ENCODE measurements at regions of chr6 and their contacts with region 1.

Region 1: GRCh38 chr6:105077596-105078385 is 102.0 kb downstream of the POPDC3 start:
- DNase-seq: peak; percentile 69
- H3K4me3 Mint-ChIP-seq: no peak overlapping the region
- H3K27ac Mint-ChIP-seq: no peak overlapping the region
- H3K4me1 Mint-ChIP-seq: peaks cover 16% of the 10 kb centered on the region
- H3K27me3 Mint-ChIP-seq: no peaks in the 10 kb centered on the region
- CTCF ChIP-seq: peak; percentile 42

Region 2: DNA sequence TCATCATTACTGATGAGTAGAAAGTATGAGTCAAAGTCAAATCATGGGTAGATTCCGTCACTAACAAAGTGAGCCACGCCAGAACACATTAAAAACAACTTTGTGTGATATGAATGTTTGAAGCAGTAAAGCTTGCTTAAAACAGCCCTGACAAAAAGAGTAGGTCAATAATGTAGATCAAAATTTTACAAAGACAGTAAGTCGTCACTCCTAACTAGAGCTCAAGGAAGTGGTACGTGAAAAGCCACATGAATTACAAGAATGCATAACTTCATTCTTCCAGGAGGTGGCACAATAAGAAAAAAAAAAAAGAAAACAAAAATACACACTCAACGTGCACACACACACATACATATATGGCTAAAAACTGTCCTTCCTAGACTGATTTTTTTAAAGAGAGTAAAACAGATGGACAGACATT is 288.0 kb before region 1 on chr6:
- CTCF ChIA-PET with region 1: interaction called, 52 read pairs
- POLR2A ChIA-PET with region 1: interaction called, 5 read pairs
- intact Hi-C with region 1: loop called (anchors 1 kb)
- DNase-seq: peak; percentile 53
- H3K4me3 Mint-ChIP-seq: peak overlapping the region; percentile 59
- H3K27ac Mint-ChIP-seq: peak overlapping the region; percentile 95
- H3K4me1 Mint-ChIP-seq: peaks cover 21% of the 10 kb centered on the region
- H3K27me3 Mint-ChIP-seq: no peaks in the 10 kb centered on the region
- CTCF ChIP-seq: peak; percentile 45

Region 3: GRCh38 chr6:104859225-104860146 is 218.3 kb before region 1 on chr6 and contains the start of gene HACE1:
- CTCF ChIA-PET with region 1: interaction called, 16 read pairs
- POLR2A ChIA-PET with region 1: interaction called, 4 read pairs
- intact Hi-C with region 1: no loop called
- DNase-seq: peak; percentile 90
- H3K4me3 Mint-ChIP-seq: peak within 1 kb of the TSS; percentile 88
- H3K27ac Mint-ChIP-seq: peak within 1 kb of the TSS; percentile 29
- H3K4me1 Mint-ChIP-seq: peaks cover 8% of the 10 kb centered on the region
- H3K27me3 Mint-ChIP-seq: no peaks in the 10 kb centered on the region
- CTCF ChIP-seq: no peak
- total RNA-seq, gene HACE1: 5.5 and 8.3 TPM in 2 replicates

Region 4: DNA sequence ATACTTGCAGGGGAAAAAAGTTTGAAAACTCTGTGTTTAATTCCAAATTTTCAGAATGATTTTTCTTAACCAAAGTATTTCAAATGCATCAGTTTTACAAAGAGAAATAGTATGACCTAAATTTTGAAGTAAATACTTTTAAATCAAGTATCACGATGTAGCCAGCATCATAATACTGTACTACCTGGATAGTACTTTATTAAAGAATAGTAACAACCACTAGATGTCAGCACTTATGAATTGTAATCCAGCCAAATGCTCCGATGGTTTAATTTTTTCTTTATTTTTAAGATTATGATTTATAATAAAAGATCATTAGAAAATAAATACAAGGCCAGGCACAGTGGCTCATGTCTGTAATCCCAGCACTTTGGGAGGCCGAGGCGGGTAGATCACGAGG is 180.9 kb before region 1 on chr6:
- CTCF ChIA-PET with region 1: interaction called, 42 read pairs
- POLR2A ChIA-PET with region 1: no interaction called
- intact Hi-C with region 1: loop called (anchors 5 kb)
- DNase-seq: no peak
- H3K4me3 Mint-ChIP-seq: no peak overlapping the region
- H3K27ac Mint-ChIP-seq: no peak overlapping the region
- H3K4me1 Mint-ChIP-seq: no peaks in the 10 kb centered on the region
- H3K27me3 Mint-ChIP-seq: peaks cover 17% of the 10 kb centered on the region
- CTCF ChIP-seq: peak; percentile 31

Region 5: DNA sequence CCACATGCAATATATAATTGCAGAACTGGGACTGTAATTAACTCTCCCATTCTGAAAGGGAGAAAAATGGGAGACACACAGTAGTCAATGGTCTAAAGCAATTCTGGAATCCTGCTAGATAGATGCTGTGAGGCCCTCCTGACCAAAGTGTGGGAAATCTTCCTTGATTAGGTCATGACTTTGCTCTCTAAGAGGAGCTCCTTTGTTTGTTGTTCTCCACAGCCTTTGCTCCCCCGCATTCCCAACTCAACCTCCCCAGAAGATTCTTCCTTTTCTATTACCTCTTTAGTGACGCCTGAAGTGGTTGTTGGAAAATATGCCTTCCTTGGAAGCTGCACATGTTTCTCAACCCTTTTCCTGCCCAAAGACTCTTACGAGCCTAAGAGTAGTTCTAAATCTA is 149.7 kb before region 1 on chr6:
- CTCF ChIA-PET with region 1: no interaction called
- POLR2A ChIA-PET with region 1: no interaction called
- intact Hi-C with region 1: no loop called
- DNase-seq: no peak
- H3K4me3 Mint-ChIP-seq: no peak overlapping the region
- H3K27ac Mint-ChIP-seq: no peak overlapping the region
- H3K4me1 Mint-ChIP-seq: no peaks in the 10 kb centered on the region
- H3K27me3 Mint-ChIP-seq: peaks cover 65% of the 10 kb centered on the region
- CTCF ChIP-seq: no peak

Region 6: DNA sequence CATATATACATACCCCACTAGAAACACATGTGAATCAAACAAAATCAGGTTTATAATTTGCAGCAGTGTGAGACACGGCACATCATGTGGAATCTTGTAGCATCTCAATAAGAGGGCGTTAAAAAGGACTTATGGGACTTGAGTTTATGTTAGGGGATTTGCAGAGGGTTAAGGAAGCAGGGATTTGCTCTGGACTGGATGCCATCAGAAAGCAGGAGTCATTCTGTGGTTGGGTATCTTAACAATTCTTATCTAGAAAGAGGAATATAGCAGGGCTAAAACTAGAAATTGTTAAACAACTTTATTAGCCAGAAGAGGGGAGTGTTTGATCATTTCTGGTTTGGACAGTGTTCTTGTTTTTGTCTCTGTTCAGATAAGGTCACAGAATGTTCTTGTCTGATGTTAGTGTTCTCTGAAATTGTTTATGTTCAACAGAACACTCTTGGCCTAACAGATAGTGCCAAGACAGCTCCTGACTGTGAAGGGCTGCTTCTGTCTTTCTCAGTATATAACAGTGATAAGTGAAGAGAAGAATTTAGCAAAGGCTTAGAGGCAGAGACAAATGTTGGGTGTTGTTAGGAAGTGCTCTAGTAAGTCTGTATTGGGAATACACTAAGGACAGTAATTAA is 81.7 kb before region 1 on chr6:
- CTCF ChIA-PET with region 1: interaction called, 78 read pairs
- POLR2A ChIA-PET with region 1: interaction called, 10 read pairs
- intact Hi-C with region 1: loop called (anchors 2 kb)
- DNase-seq: peak; percentile 49
- H3K4me3 Mint-ChIP-seq: no peak overlapping the region
- H3K27ac Mint-ChIP-seq: no peak overlapping the region
- H3K4me1 Mint-ChIP-seq: no peaks in the 10 kb centered on the region
- H3K27me3 Mint-ChIP-seq: peaks cover 2% of the 10 kb centered on the region
- CTCF ChIP-seq: peak; percentile 30

Region 7: GRCh38 chr6:105041880-105042279 is 35.9 kb before region 1 on chr6:
- CTCF ChIA-PET with region 1: interaction called, 10 read pairs
- POLR2A ChIA-PET with region 1: no interaction called
- intact Hi-C with region 1: no loop called
- DNase-seq: no peak
- H3K4me3 Mint-ChIP-seq: no peak overlapping the region
- H3K27ac Mint-ChIP-seq: no peak overlapping the region
- H3K4me1 Mint-ChIP-seq: no peaks in the 10 kb centered on the region
- H3K27me3 Mint-ChIP-seq: peaks cover 50% of the 10 kb centered on the region
- CTCF ChIP-seq: no peak